HepG2 (cell line): ENCODE measurements at regions of chr6 and their contacts with region 1.

Region 1: GRCh38 chr6:137076277-137077068 is 31.7 kb upstream of the IL20RA start:
- DNase-seq: peak; percentile 74
- ATAC-seq: peak; percentile 100
- H3K4me3 ChIP-seq: no peak overlapping the region
- H3K27ac ChIP-seq: no peak overlapping the region
- H3K4me1 ChIP-seq: no peaks in the 10 kb centered on the region
- H3K27me3 ChIP-seq: no peaks in the 10 kb centered on the region
- CTCF ChIP-seq: peak; percentile 93
- EP300 ChIP-seq: no peak
- POLR2A ChIP-seq: no peak
- RAD21 ChIP-seq: peak; percentile 85

Region 2: GRCh38 chr6:137951064-137951597 is 874.7 kb after region 1 on chr6:
- CTCF ChIA-PET with region 1: no interaction called
- POLR2A ChIA-PET with region 1: no interaction called
- in situ Hi-C with region 1: loop called (anchors 25 kb)
- intact Hi-C with region 1: no loop called
- DNase-seq: no peak
- ATAC-seq: no peak
- H3K4me3 ChIP-seq: no peak overlapping the region
- H3K27ac ChIP-seq: no peak overlapping the region
- H3K4me1 ChIP-seq: no peaks in the 10 kb centered on the region
- H3K27me3 ChIP-seq: peaks cover 0 to 31% of the 10 kb centered on the region in 2 experiments; a peak in 3 of 5 replicates
- CTCF ChIP-seq: no peak; the same call in 1 of the 2 replicates
- EP300 ChIP-seq: no peak
- POLR2A ChIP-seq: no peak
- RAD21 ChIP-seq: no peak